ENCODE measurements at regions of chr16 and their contacts with region 1.

Region 1: DNA sequence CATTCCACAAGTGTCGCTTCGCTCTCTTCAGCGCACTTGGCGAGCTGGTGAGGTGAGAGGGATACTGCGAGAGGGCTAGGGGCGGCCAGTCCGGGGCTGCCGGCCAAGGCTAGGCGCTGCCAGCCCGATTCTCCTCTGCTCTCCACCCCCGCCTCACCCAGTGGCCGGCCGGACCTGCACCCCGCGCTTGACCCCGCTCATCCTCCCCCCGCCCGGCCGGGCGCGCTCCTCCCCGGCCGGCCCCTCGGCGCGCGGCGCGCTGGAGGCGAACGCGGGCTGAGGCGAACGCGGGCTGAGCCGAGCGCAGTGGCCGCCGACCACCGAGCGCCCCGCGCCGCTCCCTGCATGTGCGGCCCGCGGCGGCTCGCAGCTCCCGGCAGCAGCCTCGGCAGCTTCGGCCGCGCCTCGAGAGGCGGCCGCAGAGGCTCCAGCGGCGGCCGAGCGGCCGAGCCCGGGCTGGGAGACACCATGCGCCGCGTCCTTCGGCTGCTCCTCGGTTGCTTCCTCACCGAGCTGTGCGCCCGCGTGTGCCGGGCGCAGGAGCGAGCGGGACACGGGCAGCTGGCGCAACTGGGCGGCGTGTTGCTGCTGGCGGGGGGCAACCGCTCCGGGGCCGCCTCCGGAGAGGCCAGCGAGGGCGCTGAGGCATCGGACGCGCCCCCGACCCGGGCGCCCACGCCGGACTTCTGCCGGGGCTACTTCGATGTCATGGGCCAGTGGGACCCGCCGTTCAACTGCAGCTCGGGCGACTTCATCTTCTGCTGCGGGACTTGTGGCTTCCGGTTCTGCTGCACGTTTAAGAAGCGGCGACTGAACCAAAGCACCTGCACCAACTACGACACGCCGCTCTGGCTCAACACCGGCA is at the start of gene SHISA9:
- DNase-seq: no peak
- H3K4me3 ChIP-seq: peak within 1 kb of the TSS; percentile 94
- H3K27ac ChIP-seq: peak within 1 kb of the TSS; percentile 99
- H3K4me1 ChIP-seq: peaks cover 50% of the 10 kb centered on the region
- H3K27me3 ChIP-seq: no peaks in the 10 kb centered on the region
- CTCF ChIP-seq: no peak
- total RNA-seq, gene SHISA9: 64.5 and 80.5 TPM in 2 replicates

Region 2: GRCh38 chr16:11949527-11949926 is 952.3 kb before region 1 on chr16:
- CTCF ChIA-PET with region 1: no interaction called
- POLR2A ChIA-PET with region 1: no interaction called
- intact Hi-C with region 1: no loop called
- DNase-seq: peak; percentile 50 to 53
- H3K4me3 ChIP-seq: no peak overlapping the region
- H3K27ac ChIP-seq: no peak overlapping the region
- H3K4me1 ChIP-seq: no peaks in the 10 kb centered on the region
- H3K27me3 ChIP-seq: no peaks in the 10 kb centered on the region
- CTCF ChIP-seq: peak; percentile 67

Region 3: GRCh38 chr16:12573730-12574383 is 328.0 kb before region 1 on chr16:
- CTCF ChIA-PET with region 1: no interaction called
- POLR2A ChIA-PET with region 1: no interaction called
- intact Hi-C with region 1: loop called (anchors 1 kb)
- DNase-seq: peak in 1 of 2 experiments; percentile 87
- H3K4me3 ChIP-seq: no peak overlapping the region
- H3K27ac ChIP-seq: peak overlapping the region; percentile 34
- H3K4me1 ChIP-seq: peaks cover 8% of the 10 kb centered on the region
- H3K27me3 ChIP-seq: no peaks in the 10 kb centered on the region
- CTCF ChIP-seq: peak; percentile 88

Region 4: DNA sequence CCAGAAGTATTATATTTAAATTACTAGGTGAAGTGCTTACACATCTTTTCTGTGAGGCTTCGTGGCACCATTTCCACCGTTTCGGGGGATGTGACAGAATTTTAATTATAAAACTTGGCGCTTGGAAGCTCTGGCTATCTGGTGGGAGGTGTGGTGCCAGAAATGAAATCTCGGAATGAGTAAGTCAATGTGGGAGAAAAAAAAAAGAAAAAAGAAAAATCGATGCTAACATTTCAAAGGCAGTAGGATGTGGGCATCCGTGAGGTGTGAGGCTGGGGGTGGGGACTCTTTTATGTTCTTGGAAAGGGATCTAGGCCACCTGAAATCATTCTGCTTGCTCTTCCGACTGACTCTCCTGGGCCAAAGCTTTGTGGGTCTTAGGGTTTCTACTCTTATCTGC is 120.1 kb before region 1 on chr16:
- CTCF ChIA-PET with region 1: no interaction called
- POLR2A ChIA-PET with region 1: no interaction called
- intact Hi-C with region 1: no loop called
- DNase-seq: no peak
- H3K4me3 ChIP-seq: no peak overlapping the region
- H3K27ac ChIP-seq: no peak overlapping the region
- H3K4me1 ChIP-seq: no peaks in the 10 kb centered on the region
- H3K27me3 ChIP-seq: no peaks in the 10 kb centered on the region
- CTCF ChIP-seq: no peak

Region 5: DNA sequence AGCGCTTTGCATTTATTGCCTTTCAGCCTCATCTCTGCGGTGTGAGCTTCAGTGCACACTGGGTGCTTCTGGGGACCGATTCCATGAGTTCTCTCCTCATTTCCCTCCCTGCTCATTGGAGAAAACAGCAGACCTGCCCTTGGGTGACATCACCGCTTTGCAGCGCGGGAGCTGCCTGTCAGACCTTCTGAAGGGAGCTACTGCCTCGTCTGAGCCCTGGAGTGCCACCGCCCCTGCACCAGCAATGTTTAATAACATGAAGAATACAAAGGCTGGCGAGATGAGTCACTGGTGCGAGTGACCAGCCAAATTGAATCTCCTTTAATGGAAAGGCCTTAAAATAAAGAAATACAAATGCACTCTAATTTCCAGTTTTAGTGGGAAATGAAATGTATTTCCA is 67.9 kb before region 1 on chr16:
- CTCF ChIA-PET with region 1: no interaction called
- POLR2A ChIA-PET with region 1: interaction called, 3 read pairs
- intact Hi-C with region 1: loop called (anchors 1 kb)
- DNase-seq: peak; percentile 92 to 95
- H3K4me3 ChIP-seq: peak overlapping the region; percentile 19; the same call in 1 of the 2 replicates
- H3K27ac ChIP-seq: peak overlapping the region; percentile 93
- H3K4me1 ChIP-seq: peaks cover 27% of the 10 kb centered on the region
- H3K27me3 ChIP-seq: no peaks in the 10 kb centered on the region
- CTCF ChIP-seq: no peak

Region 6: GRCh38 chr16:12965274-12965804 is 63.5 kb after region 1 on chr16:
- CTCF ChIA-PET with region 1: no interaction called
- POLR2A ChIA-PET with region 1: no interaction called
- intact Hi-C with region 1: no loop called
- DNase-seq: no peak
- H3K4me3 ChIP-seq: no peak overlapping the region
- H3K27ac ChIP-seq: no peak overlapping the region
- H3K4me1 ChIP-seq: peaks cover 19% of the 10 kb centered on the region
- H3K27me3 ChIP-seq: no peaks in the 10 kb centered on the region
- CTCF ChIP-seq: no peak

Region 7: GRCh38 chr16:13223666-13224065 is 321.8 kb after region 1 on chr16:
- CTCF ChIA-PET with region 1: no interaction called
- POLR2A ChIA-PET with region 1: interaction called, 5 read pairs
- intact Hi-C with region 1: loop called (anchors 5 kb)
- DNase-seq: no peak
- H3K4me3 ChIP-seq: no peak overlapping the region
- H3K27ac ChIP-seq: no peak overlapping the region
- H3K4me1 ChIP-seq: no peaks in the 10 kb centered on the region
- H3K27me3 ChIP-seq: no peaks in the 10 kb centered on the region
- CTCF ChIP-seq: no peak

Region 8: GRCh38 chr16:13402601-13403000 is 500.8 kb after region 1 on chr16:
- CTCF ChIA-PET with region 1: no interaction called
- POLR2A ChIA-PET with region 1: no interaction called
- intact Hi-C with region 1: no loop called
- DNase-seq: peak in 1 of 2 experiments; percentile 54
- H3K4me3 ChIP-seq: no peak overlapping the region
- H3K27ac ChIP-seq: no peak overlapping the region
- H3K4me1 ChIP-seq: no peaks in the 10 kb centered on the region
- H3K27me3 ChIP-seq: no peaks in the 10 kb centered on the region
- CTCF ChIP-seq: no peak

Region 9: GRCh38 chr16:13436641-13437412 is 535.0 kb after region 1 on chr16:
- CTCF ChIA-PET with region 1: interaction called, 3 read pairs
- POLR2A ChIA-PET with region 1: no interaction called
- intact Hi-C with region 1: loop called (anchors 1 kb)
- DNase-seq: peak; percentile 58 to 73
- H3K4me3 ChIP-seq: no peak overlapping the region
- H3K27ac ChIP-seq: no peak overlapping the region
- H3K4me1 ChIP-seq: peaks cover 25% of the 10 kb centered on the region
- H3K27me3 ChIP-seq: no peaks in the 10 kb centered on the region
- CTCF ChIP-seq: no peak